OCI-LY7 (cell line): ENCODE measurements at regions of chr6 and their contacts with region 1.

Region 1: DNA sequence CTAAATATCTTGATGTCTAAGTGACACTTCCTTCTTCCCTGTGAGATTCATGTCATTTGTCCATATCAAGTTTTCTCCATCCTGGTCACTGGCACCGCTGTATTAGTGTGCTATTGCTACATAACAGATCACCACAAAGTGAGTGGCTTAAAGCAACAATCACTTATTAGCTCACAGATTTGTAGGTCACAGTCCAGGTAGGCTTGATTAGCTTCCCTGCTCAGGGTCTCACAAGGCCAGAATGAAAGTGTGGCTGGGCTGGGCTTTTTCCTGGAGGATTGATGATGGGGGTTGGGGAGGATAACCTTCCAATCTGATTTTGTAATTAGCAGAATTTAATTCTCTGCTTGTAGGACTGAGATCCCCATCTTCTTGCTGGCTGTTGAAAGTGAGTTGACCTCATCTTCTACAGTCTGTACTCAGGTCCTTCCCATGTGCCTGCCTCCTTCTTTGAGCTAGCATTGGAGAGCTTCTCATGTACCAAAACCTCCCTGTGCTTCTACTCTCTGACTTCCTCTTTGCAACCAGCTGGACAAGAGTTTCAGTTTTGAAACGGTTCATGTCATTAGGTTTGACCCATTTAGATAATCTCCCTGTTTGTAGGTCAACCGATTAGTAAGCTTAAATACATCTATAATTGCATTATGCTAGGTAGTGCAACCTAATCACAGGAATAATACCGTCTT is 152.4 kb upstream of the MAN1A1 start:
- DNase-seq: peak; percentile 69
- H3K4me3 ChIP-seq: no peak overlapping the region
- H3K27ac ChIP-seq: peak overlapping the region; percentile 20
- H3K4me1 ChIP-seq: peaks cover 31% of the 10 kb centered on the region
- CTCF ChIP-seq: no peak

Region 2: GRCh38 chr6:119313937-119314884 is 187.7 kb before region 1 on chr6:
- CTCF ChIA-PET with region 1: no interaction called
- POLR2A ChIA-PET with region 1: no interaction called
- intact Hi-C with region 1: no loop called
- DNase-seq: no peak
- H3K4me3 ChIP-seq: no peak overlapping the region
- H3K27ac ChIP-seq: no peak overlapping the region
- H3K4me1 ChIP-seq: peaks cover 32% of the 10 kb centered on the region
- CTCF ChIP-seq: no peak

Region 3: GRCh38 chr6:119479860-119480655 is 21.9 kb before region 1 on chr6:
- CTCF ChIA-PET with region 1: no interaction called
- POLR2A ChIA-PET with region 1: interaction called, 10 read pairs
- intact Hi-C with region 1: no loop called
- DNase-seq: no peak
- H3K4me3 ChIP-seq: no peak overlapping the region
- H3K27ac ChIP-seq: no peak overlapping the region
- H3K4me1 ChIP-seq: peaks cover 14% of the 10 kb centered on the region
- CTCF ChIP-seq: no peak

Region 4: DNA sequence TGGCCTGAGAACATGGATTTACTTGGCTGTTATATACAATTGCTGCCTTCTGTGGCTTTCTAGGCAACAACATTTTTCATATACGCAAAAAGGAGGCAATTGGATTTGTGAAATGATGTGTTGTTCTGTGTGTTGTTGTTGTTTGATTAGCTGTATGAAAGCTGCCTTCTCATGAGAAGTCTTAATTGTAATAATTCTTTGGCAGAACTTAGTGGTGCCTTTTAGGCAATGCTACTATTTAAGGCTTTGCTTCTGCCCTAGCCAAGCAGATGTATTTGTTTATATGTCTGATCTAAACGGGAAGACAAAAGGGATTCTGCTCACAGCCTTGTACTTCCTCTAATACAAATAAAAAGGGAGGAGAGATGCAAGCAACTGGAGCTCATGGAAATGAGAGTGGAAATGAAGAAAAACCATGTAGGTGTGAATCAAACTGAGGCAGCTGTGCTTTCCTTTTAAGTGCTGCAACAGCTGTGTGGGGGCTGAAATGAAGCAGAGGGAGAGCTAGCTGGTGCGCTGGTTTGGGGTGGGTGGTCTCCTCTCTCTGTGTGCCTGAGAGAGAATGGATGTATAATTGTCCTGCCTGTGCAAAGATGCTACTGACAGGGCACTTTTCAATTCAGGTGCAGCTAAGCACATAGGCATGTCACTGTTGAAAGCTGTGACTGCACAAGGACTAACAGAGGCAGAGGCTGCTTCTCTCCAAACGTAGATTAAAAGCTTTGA is 234.5 kb after region 1 on chr6:
- CTCF ChIA-PET with region 1: no interaction called
- POLR2A ChIA-PET with region 1: no interaction called
- intact Hi-C with region 1: no loop called
- DNase-seq: peak; percentile 10
- H3K4me3 ChIP-seq: no peak overlapping the region
- H3K27ac ChIP-seq: no peak overlapping the region
- H3K4me1 ChIP-seq: peaks cover 18% of the 10 kb centered on the region
- CTCF ChIP-seq: no peak